Activated T-helper 2 cell treated with anti-CD3 and anti-CD28 coated beads, Interferon-gamma antibody, Interleukin-2, Interleukin-4, amounts not matched to agents 10 μg/mL and 5 μg/mL and 100 μg/mL, durations not matched to agents 14 hours and 24 hours and 36 hours (primary cell): ENCODE measurements at regions of chr4 and their contacts with region 1.

Region 1: GRCh38 chr4:67658302-67658701 is 42.7 kb downstream of the UBA6 start:
- DNase-seq: no peak
- H3K4me3 Mint-ChIP-seq: no peak overlapping the region
- H3K27ac Mint-ChIP-seq: peak overlapping the region; percentile 35
- H3K4me1 Mint-ChIP-seq: peaks cover 10% of the 10 kb centered on the region
- H3K27me3 Mint-ChIP-seq: no peaks in the 10 kb centered on the region

Region 2: GRCh38 chr4:67581208-67581857 is 77.0 kb before region 1 on chr4:
- intact Hi-C with region 1: no loop called
- DNase-seq: no peak
- H3K4me3 Mint-ChIP-seq: peak overlapping the region; percentile 62
- H3K27ac Mint-ChIP-seq: peak overlapping the region; percentile 87
- H3K4me1 Mint-ChIP-seq: peaks cover 31% of the 10 kb centered on the region
- H3K27me3 Mint-ChIP-seq: no peaks in the 10 kb centered on the region

Region 3: DNA sequence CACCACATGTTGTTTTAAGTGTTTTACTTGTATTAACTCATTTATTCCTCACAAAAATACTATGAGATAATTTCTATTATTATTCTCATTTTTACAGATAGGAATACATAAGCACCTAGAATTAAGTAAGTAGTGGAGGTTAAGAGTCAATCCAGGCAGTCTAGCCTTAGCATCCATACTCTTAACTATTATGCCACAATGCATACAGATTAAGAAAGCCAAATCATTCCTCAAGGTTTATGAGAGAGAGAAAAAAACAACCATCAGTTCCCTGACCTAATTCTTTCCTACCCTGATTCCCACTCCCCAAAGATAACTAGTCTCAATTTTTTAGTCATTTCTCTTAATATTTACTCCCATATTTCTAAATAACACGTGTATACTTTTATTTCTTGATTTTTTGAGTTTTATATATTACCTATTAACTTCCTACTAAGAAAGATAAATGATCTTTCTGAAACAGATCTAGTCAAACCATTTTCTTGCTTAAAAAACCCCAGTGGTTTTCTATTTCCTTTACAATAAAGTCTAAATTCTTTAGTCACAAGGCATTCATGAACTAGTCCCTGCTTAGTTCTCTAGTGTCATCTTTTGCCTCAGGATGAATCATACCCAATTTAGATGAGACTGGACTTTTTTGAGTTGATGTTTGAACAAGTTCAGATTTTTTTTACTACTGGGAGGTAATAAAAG is 26.7 kb after region 1 on chr4:
- intact Hi-C with region 1: loop called (anchors 1 kb)
- DNase-seq: no peak
- H3K4me3 Mint-ChIP-seq: no peak overlapping the region
- H3K27ac Mint-ChIP-seq: peak overlapping the region; percentile 23
- H3K4me1 Mint-ChIP-seq: peaks cover 44% of the 10 kb centered on the region
- H3K27me3 Mint-ChIP-seq: no peaks in the 10 kb centered on the region

Region 4: DNA sequence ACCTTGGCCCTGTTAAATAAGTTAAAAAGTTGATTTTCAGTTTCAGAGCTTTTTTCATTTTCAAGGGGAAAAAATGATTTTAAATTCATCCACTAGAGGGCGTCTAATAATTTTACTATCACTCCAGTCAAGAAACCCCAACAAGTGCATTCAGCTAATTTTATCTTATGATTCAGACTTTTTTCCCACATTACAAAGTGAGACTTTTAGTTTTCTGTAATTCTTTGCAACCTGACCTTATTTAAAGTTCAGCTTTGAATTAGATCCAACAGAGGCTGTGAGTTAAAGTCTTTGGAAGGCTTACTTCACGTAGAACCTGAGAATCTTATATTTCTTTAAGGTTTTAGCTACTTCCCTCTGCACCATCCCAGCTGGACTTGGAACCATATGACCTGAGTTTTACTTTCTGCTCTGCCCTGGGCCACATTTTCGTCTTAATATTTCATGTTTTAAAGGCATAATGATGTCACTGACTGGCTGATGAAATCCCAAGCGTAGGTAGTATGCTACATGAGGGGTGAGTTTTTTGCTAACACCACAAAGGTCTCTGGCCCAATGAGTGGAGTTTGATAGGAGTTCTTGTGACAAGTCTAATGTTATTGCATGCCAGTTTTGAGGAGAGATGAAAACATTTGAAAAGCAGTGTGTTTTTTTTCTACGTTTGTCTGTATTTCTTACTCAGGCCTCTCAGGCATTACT is 88.6 kb after region 1 on chr4:
- intact Hi-C with region 1: no loop called
- DNase-seq: no peak
- H3K4me3 Mint-ChIP-seq: no peak overlapping the region
- H3K27ac Mint-ChIP-seq: peak overlapping the region; percentile 2
- H3K4me1 Mint-ChIP-seq: peaks cover 17% of the 10 kb centered on the region
- H3K27me3 Mint-ChIP-seq: no peaks in the 10 kb centered on the region